Activated naive CD4-positive, alpha-beta T cell treated with anti-CD3 and anti-CD28 coated beads for 36 hours (primary cell): ENCODE measurements at regions of chr21 and their contacts with region 1.

Region 1: DNA sequence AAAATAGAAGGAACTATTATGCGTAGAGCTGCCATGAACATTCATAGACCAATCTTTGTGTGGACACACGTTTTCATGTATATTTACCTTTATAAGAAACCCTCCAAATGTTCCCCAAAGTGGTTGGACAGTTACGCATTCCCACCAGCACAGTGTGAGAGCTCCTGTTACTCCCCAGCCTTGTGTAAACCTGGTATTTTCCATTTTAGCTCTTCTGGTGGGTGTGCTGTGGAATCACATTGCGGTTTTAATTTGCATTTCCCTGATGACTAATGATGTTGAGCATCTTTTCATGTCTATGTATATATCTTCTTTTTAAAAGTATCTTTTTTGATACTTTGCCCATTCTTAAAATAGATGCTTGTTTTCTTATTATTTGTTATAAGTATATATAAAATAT is 3.2 kb upstream of the UBASH3A start:
- DNase-seq: peak; percentile 38
- H3K4me3 Mint-ChIP-seq: no peak overlapping the region
- H3K27ac Mint-ChIP-seq: no peak overlapping the region
- H3K4me1 Mint-ChIP-seq: peaks cover 55% of the 10 kb centered on the region
- H3K27me3 Mint-ChIP-seq: no peaks in the 10 kb centered on the region

Region 2: DNA sequence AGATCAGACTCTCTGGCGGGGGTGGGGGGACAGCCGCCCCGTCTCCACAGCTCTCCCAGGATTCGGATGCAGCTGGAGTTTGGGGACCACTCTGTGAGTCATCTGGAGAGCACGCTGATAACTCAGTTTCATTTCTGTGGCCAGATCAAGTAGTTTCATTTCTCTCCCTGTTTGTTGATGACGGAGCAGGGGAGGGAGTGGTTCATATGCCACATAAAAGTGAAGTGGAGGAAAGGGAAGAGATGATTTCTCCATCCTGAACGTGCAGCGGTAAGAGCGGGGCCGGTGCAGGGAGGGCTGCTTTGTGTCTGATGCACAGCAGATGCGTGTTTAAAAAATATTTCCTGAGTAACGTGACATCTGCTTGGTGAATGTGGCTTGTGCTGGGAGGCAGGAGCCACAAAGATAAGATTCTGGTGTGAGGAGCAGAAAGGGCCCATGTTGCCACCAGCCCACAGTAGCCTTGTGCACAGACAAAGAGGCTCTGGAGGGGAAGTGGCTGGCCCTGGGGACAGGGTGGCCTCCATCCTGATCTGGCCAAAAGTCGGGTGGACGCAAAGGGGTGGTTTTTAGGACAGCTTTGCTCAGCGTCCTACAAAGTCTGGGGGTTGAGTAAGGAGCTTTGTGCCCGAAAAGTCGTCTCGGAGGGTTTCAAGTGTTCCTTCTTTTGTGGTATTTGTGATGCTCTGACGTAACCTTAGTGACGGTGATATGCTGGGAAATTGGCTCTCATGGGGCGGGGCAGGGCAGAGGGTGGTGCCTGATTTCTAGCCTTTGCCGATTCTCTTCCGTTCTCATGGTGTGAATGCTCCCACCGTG is 1038.5 kb before region 1 on chr21 and contains the start of gene MX2:
- CTCF ChIA-PET with region 1: no interaction called
- intact Hi-C with region 1: loop called (anchors 10 kb)
- DNase-seq: peak; percentile 89
- H3K4me3 Mint-ChIP-seq: peak within 1 kb of the TSS; percentile 80
- H3K27ac Mint-ChIP-seq: peak within 1 kb of the TSS; percentile 97
- H3K4me1 Mint-ChIP-seq: peaks cover 57% of the 10 kb centered on the region
- H3K27me3 Mint-ChIP-seq: no peaks in the 10 kb centered on the region
- total RNA-seq, gene MX2: 32.5 to 33.4 TPM

Region 3: DNA sequence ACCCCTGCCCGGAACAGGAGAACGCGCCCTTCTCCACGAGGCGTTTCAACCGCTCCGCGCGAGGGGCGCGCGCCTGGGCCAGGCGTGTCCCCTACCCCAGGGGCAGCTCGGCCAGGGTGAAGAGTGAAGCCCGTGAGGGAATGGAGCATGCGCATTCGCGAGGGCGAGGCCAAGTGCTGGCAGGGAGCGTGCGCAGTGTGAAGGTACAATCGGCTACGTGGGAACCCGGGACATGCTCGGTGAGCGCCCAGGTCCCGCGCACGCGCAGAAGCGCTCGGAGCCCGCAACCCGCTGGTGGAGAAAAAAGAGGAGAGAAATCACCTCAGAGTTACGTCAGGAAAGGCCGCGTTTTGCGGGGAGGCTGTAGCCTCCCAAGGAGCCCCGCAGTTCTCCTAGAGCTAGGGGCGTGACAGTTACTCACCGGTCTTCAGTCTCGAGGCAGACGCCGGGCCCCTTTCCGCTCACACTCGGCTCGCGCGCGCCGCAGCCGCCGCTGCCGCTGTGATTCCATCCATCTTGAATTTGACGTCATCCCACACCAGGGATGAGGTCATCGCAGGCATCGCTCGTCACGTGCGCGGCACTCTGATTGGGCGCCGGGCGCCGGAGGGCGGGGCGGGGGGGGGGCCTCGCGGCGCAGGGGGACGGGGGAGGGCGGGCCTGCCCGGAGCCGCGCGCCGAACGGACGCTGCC is 390.5 kb before region 1 on chr21 and contains the start of gene ZBTB21:
- CTCF ChIA-PET with region 1: no interaction called
- intact Hi-C with region 1: loop called (anchors 10 kb)
- DNase-seq: peak; percentile 98
- H3K4me3 Mint-ChIP-seq: peak within 1 kb of the TSS; percentile 98
- H3K27ac Mint-ChIP-seq: peak within 1 kb of the TSS; percentile 99
- H3K4me1 Mint-ChIP-seq: peaks cover 32% of the 10 kb centered on the region
- H3K27me3 Mint-ChIP-seq: no peaks in the 10 kb centered on the region
- total RNA-seq, gene ZBTB21: 27.8 to 28.0 TPM

Region 4: DNA sequence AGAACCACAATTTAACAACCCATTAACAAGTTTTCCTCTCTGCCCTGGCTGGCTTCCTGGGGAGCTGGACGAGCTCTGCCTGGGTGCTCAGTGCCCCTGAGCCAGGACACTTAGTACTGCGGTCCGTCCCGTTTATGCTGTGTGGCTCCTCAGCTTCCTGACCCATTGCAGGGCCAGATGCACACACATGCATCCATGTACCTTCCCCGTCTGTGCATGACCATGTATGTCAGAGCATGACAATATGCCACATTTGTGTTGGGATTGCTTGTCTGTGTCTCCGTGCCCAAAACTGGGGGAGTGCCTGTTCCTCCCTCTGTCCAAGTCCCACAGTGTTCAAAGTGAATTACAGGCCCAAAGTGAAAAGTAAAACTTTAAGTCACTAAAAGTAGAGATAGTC is 75.6 kb before region 1 on chr21:
- CTCF ChIA-PET with region 1: no interaction called
- intact Hi-C with region 1: no loop called
- DNase-seq: no peak
- H3K4me3 Mint-ChIP-seq: no peak overlapping the region
- H3K27ac Mint-ChIP-seq: no peak overlapping the region
- H3K4me1 Mint-ChIP-seq: no peaks in the 10 kb centered on the region
- H3K27me3 Mint-ChIP-seq: no peaks in the 10 kb centered on the region

Region 5: DNA sequence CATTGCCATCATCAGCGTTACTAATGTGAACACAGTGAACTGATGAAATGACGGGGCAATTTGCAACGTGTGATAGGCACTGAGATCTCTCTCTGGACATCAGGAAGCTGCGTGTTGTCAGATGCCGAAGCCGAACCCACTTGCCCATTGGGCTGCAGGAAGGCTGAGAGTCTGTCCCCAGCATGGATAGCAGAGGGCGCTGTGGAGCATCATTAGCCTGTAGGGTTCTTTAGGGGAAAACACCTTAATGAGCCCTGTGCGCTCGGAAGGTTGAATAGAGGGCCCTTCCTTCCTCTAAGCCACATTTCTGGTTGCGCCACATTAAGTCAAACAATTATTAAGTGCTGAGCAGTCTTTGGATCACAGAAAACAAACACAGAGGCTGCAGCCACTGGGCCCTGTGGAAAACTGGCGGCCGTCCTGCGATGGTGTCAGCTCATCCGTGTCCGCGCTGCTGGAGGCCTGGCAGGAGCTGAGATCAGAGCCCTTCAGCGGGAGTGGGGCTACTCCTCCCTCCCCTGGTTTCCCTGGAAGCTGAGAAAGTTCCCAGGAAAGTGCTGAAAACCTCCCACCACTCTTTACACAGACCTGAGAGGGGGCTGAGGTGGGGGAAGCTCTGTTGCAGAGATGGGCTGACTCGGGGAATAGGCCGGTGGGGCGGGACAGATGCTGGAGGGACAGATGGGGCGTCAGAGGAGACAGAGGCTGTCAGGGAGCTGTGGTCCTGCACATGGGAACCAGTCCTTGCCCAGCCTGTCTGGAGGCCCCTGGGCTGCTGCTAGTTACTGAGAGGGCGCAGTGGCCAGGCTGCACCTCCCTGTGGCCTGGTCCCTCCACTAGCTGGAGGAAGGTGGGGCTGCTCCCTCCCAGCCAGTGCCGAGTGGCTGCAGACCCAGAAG is 62.4 kb before region 1 on chr21:
- CTCF ChIA-PET with region 1: interaction called, 12 read pairs
- intact Hi-C with region 1: no loop called
- DNase-seq: peak; percentile 94
- H3K4me3 Mint-ChIP-seq: no peak overlapping the region
- H3K27ac Mint-ChIP-seq: no peak overlapping the region
- H3K4me1 Mint-ChIP-seq: peaks cover 8% of the 10 kb centered on the region
- H3K27me3 Mint-ChIP-seq: no peaks in the 10 kb centered on the region

Region 6: DNA sequence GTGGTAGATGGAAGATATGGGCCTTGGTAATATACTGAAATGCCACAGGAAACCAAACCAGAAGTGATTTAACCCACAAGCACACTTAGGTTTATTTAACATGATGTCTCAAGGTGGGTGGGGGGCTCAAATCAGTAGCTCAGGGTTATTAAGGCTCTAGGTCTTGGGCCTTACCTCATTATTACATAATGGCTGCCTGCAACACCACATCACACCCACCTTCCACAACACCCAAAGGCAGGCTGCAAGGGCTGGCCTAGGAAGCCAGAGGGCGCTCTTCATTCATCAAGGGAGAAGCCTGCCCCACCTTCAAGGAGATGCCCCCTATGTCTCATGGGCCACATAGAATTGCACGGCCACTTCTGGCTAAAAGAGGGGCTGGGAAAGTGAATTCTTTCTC is 40.2 kb before region 1 on chr21:
- CTCF ChIA-PET with region 1: no interaction called
- intact Hi-C with region 1: no loop called
- DNase-seq: peak; percentile 37
- H3K4me3 Mint-ChIP-seq: no peak overlapping the region
- H3K27ac Mint-ChIP-seq: no peak overlapping the region
- H3K4me1 Mint-ChIP-seq: no peaks in the 10 kb centered on the region
- H3K27me3 Mint-ChIP-seq: no peaks in the 10 kb centered on the region

Region 7: GRCh38 chr21:42414928-42415769 is 14.6 kb after region 1 on chr21:
- CTCF ChIA-PET with region 1: interaction called, 12 read pairs
- intact Hi-C with region 1: no loop called
- DNase-seq: peak; percentile 99
- H3K4me3 Mint-ChIP-seq: peak overlapping the region; percentile 64
- H3K27ac Mint-ChIP-seq: peak overlapping the region; percentile 94
- H3K4me1 Mint-ChIP-seq: peaks cover 64% of the 10 kb centered on the region
- H3K27me3 Mint-ChIP-seq: no peaks in the 10 kb centered on the region

Region 8: GRCh38 chr21:42505090-42505726 is 104.7 kb after region 1 on chr21:
- CTCF ChIA-PET with region 1: no interaction called
- intact Hi-C with region 1: no loop called
- DNase-seq: no peak
- H3K4me3 Mint-ChIP-seq: no peak overlapping the region
- H3K27ac Mint-ChIP-seq: no peak overlapping the region
- H3K4me1 Mint-ChIP-seq: peaks cover 4% of the 10 kb centered on the region
- H3K27me3 Mint-ChIP-seq: no peaks in the 10 kb centered on the region

Region 9: GRCh38 chr21:42684109-42684916 is 283.8 kb after region 1 on chr21:
- CTCF ChIA-PET with region 1: no interaction called
- intact Hi-C with region 1: loop called (anchors 5 kb)
- DNase-seq: peak; percentile 74
- H3K4me3 Mint-ChIP-seq: peak overlapping the region; percentile 65
- H3K27ac Mint-ChIP-seq: peak overlapping the region; percentile 81
- H3K4me1 Mint-ChIP-seq: peaks cover 46% of the 10 kb centered on the region
- H3K27me3 Mint-ChIP-seq: no peaks in the 10 kb centered on the region